HepG2 (cell line): ENCODE measurements at regions of chr9 and their contacts with region 1.

Region 1: DNA sequence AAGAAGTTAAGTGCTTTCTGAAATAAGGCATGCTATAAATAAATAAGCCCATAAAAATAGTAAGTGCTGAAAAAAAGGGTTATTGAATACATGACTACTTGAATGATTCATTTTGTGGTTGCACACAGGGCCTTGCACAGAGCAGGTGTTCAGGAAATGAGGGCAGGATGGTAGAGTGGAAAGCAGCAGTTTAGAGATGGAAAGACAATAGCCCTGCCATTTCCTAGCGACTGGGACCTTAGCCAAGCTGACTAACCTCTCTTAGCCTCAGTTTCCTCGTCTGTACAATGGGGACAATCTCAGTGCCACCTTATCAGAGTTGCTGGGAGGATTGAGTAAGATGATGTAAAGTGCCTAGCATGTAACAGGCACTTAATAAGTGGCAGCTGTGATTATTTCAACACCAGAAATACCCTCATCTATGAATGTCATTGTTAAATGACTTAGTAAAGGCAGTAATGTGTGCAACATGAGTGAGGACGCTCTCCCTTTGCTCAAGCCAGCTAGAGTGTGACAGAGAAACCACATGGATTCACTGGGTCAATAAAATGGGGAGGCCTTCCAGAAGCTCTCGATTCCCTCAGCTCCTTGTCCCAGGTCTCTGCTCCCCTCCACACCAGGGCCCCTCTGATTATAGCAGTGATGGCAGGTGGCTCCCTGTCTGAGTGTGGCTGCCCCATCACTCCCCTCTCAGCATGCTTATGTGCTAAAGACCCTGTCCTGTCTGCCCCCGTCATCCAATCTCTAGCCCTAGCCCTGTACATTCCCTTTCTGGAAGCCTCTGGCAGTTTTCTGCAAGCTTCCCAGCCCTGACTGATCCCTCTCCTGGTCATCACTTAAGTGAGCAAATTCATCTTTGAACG is 16.0 kb upstream of the PHF19 start:
- DNase-seq: no peak
- ATAC-seq: no peak
- H3K4me3 ChIP-seq: no peak overlapping the region
- H3K27ac ChIP-seq: no peak overlapping the region
- H3K4me1 ChIP-seq: peaks cover 48% of the 10 kb centered on the region
- H3K27me3 ChIP-seq: peaks cover 3 to 14% of the 10 kb centered on the region in 2 experiments; a peak in 2 of 5 replicates
- CTCF ChIP-seq: no peak
- EP300 ChIP-seq: no peak
- POLR2A ChIP-seq: no peak
- RAD21 ChIP-seq: no peak

Region 2: GRCh38 chr9:120928483-120929228 is 35.7 kb after region 1 on chr9:
- CTCF ChIA-PET with region 1: no interaction called
- POLR2A ChIA-PET with region 1: interaction called, 3 read pairs
- in situ Hi-C with region 1: no loop called
- intact Hi-C with region 1: loop called (anchors 5 kb)
- DNase-seq: peak; percentile 21
- ATAC-seq: peak; percentile 93
- H3K4me3 ChIP-seq: peak overlapping the region; percentile 69 to 86 (median 84)
- H3K27ac ChIP-seq: peak overlapping the region; percentile 27
- H3K4me1 ChIP-seq: peaks cover 17% of the 10 kb centered on the region
- H3K27me3 ChIP-seq: peaks cover 2 to 17% of the 10 kb centered on the region in 2 experiments; a peak in 2 of 5 replicates
- CTCF ChIP-seq: no peak
- EP300 ChIP-seq: no peak
- POLR2A ChIP-seq: peak in 1 of 2 experiments; percentile 65; a peak in 2 of 4 replicates
- RAD21 ChIP-seq: peak; percentile 33; the same call in 1 of the 2 replicates

Region 3: GRCh38 chr9:120951960-120952618 is 59.1 kb after region 1 on chr9:
- CTCF ChIA-PET with region 1: no interaction called
- POLR2A ChIA-PET with region 1: no interaction called
- in situ Hi-C with region 1: no loop called
- intact Hi-C with region 1: no loop called
- DNase-seq: no peak
- ATAC-seq: no peak
- H3K4me3 ChIP-seq: no peak overlapping the region
- H3K27ac ChIP-seq: no peak overlapping the region
- H3K4me1 ChIP-seq: no peaks in the 10 kb centered on the region
- H3K27me3 ChIP-seq: no peaks in the 10 kb centered on the region
- CTCF ChIP-seq: no peak
- EP300 ChIP-seq: no peak
- POLR2A ChIP-seq: no peak
- RAD21 ChIP-seq: no peak